Activated naive CD4-positive, alpha-beta T cell treated with anti-CD3 and anti-CD28 coated beads for 36 hours (primary cell): ENCODE measurements at regions of chr7 and their contacts with region 1.

Region 1: GRCh38 chr7:143901668-143902331 is at the start of gene TCAF1:
- DNase-seq: peak; percentile 93
- H3K4me3 Mint-ChIP-seq: peak within 1 kb of the TSS; percentile 88
- H3K27ac Mint-ChIP-seq: peak within 1 kb of the TSS; percentile 82
- H3K4me1 Mint-ChIP-seq: peaks cover 20% of the 10 kb centered on the region
- H3K27me3 Mint-ChIP-seq: no peaks in the 10 kb centered on the region
- total RNA-seq, gene TCAF1: 13.7 to 13.8 TPM

Region 2: GRCh38 chr7:143490717-143491306 is 411.0 kb before region 1 on chr7:
- CTCF ChIA-PET with region 1: no interaction called
- intact Hi-C with region 1: loop called (anchors 5 kb)
- DNase-seq: peak; percentile 36
- H3K4me3 Mint-ChIP-seq: no peak overlapping the region
- H3K27ac Mint-ChIP-seq: no peak overlapping the region
- H3K4me1 Mint-ChIP-seq: peaks cover 30% of the 10 kb centered on the region
- H3K27me3 Mint-ChIP-seq: no peaks in the 10 kb centered on the region

Region 3: GRCh38 chr7:143929224-143929920 is 27.6 kb after region 1 on chr7:
- CTCF ChIA-PET with region 1: interaction called, 7 read pairs
- intact Hi-C with region 1: loop called (anchors 1 kb)
- DNase-seq: peak; percentile 49
- H3K4me3 Mint-ChIP-seq: no peak overlapping the region
- H3K27ac Mint-ChIP-seq: no peak overlapping the region
- H3K4me1 Mint-ChIP-seq: peaks cover 12% of the 10 kb centered on the region
- H3K27me3 Mint-ChIP-seq: no peaks in the 10 kb centered on the region

Region 4: DNA sequence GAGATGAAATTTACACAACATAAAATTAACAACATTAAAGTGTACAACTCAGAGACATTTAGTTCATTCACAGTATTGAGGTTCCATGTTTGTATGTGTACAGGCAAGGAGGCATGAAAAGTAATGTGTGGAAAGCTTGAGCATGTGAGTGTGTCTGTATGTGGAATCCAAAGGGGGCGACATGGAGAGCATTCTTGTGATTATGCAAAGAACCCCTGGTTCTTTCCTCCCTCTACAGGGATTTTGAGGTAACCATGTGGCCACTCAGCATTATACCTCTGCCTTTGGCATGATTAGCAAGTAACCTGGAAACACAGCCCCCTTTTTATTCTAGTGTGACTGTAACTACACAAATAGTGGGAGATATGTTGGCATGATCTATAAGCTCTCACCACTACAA is 73.8 kb after region 1 on chr7:
- CTCF ChIA-PET with region 1: no interaction called
- intact Hi-C with region 1: loop called (anchors 1 kb)
- DNase-seq: peak; percentile 18
- H3K4me3 Mint-ChIP-seq: no peak overlapping the region
- H3K27ac Mint-ChIP-seq: no peak overlapping the region
- H3K4me1 Mint-ChIP-seq: no peaks in the 10 kb centered on the region
- H3K27me3 Mint-ChIP-seq: no peaks in the 10 kb centered on the region

Region 5: DNA sequence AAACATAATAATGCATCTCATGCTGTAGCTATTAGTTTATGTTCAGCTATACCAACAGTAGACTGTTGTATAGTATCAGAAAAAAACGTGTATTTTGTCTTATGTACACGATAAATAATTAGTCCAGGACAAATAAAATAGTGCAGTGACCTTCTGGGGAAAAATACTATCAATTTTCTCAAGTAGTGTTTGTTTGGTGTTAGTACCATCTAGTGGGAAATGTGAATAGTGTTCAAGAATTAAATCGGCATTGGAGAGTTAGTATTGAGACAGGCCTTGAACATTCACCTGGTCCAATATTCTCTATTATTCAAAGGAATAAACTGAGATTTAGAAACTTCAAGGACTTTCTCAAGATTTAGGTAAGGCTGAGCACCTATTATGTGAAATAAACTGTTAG is 125.3 kb after region 1 on chr7:
- CTCF ChIA-PET with region 1: interaction called, 4 read pairs
- intact Hi-C with region 1: loop called (anchors 1 kb)
- DNase-seq: no peak
- H3K4me3 Mint-ChIP-seq: no peak overlapping the region
- H3K27ac Mint-ChIP-seq: no peak overlapping the region
- H3K4me1 Mint-ChIP-seq: peaks cover 6% of the 10 kb centered on the region
- H3K27me3 Mint-ChIP-seq: no peaks in the 10 kb centered on the region

Region 6: GRCh38 chr7:144127703-144128334 is 226.0 kb after region 1 on chr7:
- CTCF ChIA-PET with region 1: interaction called, 26 read pairs
- intact Hi-C with region 1: loop called (anchors 5 kb)
- DNase-seq: peak; percentile 97
- H3K4me3 Mint-ChIP-seq: no peak overlapping the region
- H3K27ac Mint-ChIP-seq: no peak overlapping the region
- H3K4me1 Mint-ChIP-seq: no peaks in the 10 kb centered on the region
- H3K27me3 Mint-ChIP-seq: no peaks in the 10 kb centered on the region

Region 7: DNA sequence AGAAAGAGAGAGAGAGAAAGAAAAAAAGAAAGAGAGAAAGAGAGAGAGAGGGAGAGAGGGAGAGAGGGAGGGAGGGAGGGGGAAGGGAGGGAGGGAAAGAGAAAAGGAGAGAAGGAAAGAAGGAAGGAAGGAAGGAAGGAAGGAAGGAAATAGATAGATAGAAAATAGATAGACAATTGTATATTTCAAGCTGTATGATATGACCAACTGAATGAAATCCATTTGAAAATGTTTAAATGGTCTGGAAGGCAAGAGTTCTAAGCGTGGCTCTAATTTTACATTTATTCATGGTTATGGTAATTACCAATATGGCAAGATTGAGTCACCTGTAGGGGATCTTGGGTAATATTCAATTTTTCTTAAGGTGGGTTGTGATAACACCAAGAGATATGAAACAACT is 257.1 kb after region 1 on chr7:
- CTCF ChIA-PET with region 1: no interaction called
- intact Hi-C with region 1: no loop called
- DNase-seq: no peak
- H3K4me3 Mint-ChIP-seq: no peak overlapping the region
- H3K27ac Mint-ChIP-seq: no peak overlapping the region
- H3K4me1 Mint-ChIP-seq: no peaks in the 10 kb centered on the region
- H3K27me3 Mint-ChIP-seq: peaks cover 3% of the 10 kb centered on the region